H1 (cell line): ENCODE measurements at regions of chr16 and their contacts with region 1.

Region 1: DNA sequence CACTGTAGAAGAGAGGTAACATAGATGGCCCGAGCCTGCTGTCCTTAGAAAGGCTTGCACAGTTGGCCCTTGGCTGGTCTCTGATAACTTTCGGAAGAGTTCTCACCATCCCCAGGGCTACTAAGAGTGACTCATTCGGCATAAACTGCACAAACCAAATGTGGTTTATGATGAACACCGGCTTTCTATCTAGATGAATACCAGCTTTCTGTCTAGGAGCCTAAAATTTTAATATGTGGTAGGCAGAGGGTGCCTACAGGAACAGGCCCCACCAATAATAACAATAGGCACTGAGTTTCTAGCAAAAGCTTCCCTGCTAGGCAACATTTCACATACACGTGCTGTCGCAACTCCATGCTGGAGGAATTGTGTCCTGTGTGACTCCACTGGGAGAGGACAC is 15.4 kb downstream of the CNOT1 start:
- DNase-seq: no peak
- H3K4me3 ChIP-seq: no peak overlapping the region
- H3K27ac ChIP-seq: no peak overlapping the region
- H3K4me1 ChIP-seq: no peaks in the 10 kb centered on the region
- H3K27me3 ChIP-seq: no peaks in the 10 kb centered on the region
- CTCF ChIP-seq: no peak
- EP300 ChIP-seq: no peak
- POLR2A ChIP-seq: no peak
- RAD21 ChIP-seq: no peak

Region 2: GRCh38 chr16:58629572-58630104 is 15.4 kb after region 1 on chr16 and contains the start of gene CNOT1:
- CTCF ChIA-PET with region 1: no interaction called
- POLR2A ChIA-PET with region 1: interaction called, 25 read pairs
- DNase-seq: peak; percentile 95 to 97
- H3K4me3 ChIP-seq: peak within 1 kb of the TSS; percentile 83 to 99 (median 94)
- H3K27ac ChIP-seq: peak within 1 kb of the TSS; percentile 98
- H3K4me1 ChIP-seq: peaks cover 0 to 3% (median 0%) of the 10 kb centered on the region in 4 experiments; a peak in 3 of 7 replicates
- H3K27me3 ChIP-seq: no peaks in the 10 kb centered on the region
- CTCF ChIP-seq: no peak
- EP300 ChIP-seq: 0 out of 3 replicates have a peak, but pooled peaks of 1 of the 2 experiments have one; percentile 23
- POLR2A ChIP-seq: peak; percentile 50 to 76; a peak in 1 of 3 replicates
- RAD21 ChIP-seq: no peak
- total RNA-seq, gene CNOT1: 306 and 309 TPM in 2 replicates